Pancreas (tissue), 10 donors: ENCODE measurements at regions of chr7 and their contacts with region 1.

Region 1: GRCh38 chr7:63953181-63953580 is 45.5 kb upstream of the ZNF722 start:
- DNase-seq: no peak
- ATAC-seq: no peak
- H3K4me3 ChIP-seq: no peak overlapping the region
- H3K27ac ChIP-seq: no peak overlapping the region
- H3K4me1 ChIP-seq: no peaks in the 10 kb centered on the region
- H3K27me3 ChIP-seq: no peaks in the 10 kb centered on the region
- CTCF ChIP-seq: no peak

Region 2: GRCh38 chr7:63887031-63887430 is 66.2 kb before region 1 on chr7:
- intact Hi-C with region 1: loop called in 1 of 3 experiments (anchors 10 kb)
- DNase-seq: no peak
- ATAC-seq: no peak
- H3K4me3 ChIP-seq: no peak overlapping the region
- H3K27ac ChIP-seq: no peak overlapping the region
- H3K4me1 ChIP-seq: no peaks in the 10 kb centered on the region
- H3K27me3 ChIP-seq: no peaks in the 10 kb centered on the region
- CTCF ChIP-seq: no peak

Region 3: GRCh38 chr7:64087501-64087900 is 134.3 kb after region 1 on chr7:
- intact Hi-C with region 1: no loop called
- DNase-seq: no peak
- ATAC-seq: no peak
- H3K4me3 ChIP-seq: no peak overlapping the region
- H3K27ac ChIP-seq: no peak overlapping the region
- H3K4me1 ChIP-seq: no peaks in the 10 kb centered on the region
- H3K27me3 ChIP-seq: no peaks in the 10 kb centered on the region
- CTCF ChIP-seq: no peak

Region 4: DNA sequence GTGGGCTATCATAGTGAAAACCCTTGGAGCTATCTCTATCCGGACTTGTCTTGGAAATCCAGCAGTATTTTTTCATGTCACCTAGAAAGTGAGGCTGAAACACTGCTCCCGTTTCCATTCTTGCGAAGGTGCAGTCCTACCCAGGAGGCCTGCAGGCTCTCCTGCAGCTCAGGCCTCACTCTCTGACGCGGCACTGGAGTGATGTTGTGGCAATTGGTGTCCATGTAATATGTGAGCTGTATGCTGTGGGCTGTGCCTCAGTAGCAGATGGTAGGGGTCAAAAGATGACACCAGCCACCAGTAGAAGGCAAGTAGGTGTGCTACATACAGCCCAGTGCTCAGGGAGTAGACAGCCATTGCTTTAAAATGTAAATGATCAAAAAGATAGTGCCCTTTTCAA is 637.8 kb after region 1 on chr7:
- intact Hi-C with region 1: no loop called
- DNase-seq: no peak
- ATAC-seq: no peak
- H3K4me3 ChIP-seq: no peak overlapping the region
- H3K27ac ChIP-seq: no peak overlapping the region
- H3K4me1 ChIP-seq: no peaks in the 10 kb centered on the region
- H3K27me3 ChIP-seq: no peaks in the 10 kb centered on the region
- CTCF ChIP-seq: no peak